ENCODE measurements at regions of chr16 and their contacts with region 1.

Region 1: DNA sequence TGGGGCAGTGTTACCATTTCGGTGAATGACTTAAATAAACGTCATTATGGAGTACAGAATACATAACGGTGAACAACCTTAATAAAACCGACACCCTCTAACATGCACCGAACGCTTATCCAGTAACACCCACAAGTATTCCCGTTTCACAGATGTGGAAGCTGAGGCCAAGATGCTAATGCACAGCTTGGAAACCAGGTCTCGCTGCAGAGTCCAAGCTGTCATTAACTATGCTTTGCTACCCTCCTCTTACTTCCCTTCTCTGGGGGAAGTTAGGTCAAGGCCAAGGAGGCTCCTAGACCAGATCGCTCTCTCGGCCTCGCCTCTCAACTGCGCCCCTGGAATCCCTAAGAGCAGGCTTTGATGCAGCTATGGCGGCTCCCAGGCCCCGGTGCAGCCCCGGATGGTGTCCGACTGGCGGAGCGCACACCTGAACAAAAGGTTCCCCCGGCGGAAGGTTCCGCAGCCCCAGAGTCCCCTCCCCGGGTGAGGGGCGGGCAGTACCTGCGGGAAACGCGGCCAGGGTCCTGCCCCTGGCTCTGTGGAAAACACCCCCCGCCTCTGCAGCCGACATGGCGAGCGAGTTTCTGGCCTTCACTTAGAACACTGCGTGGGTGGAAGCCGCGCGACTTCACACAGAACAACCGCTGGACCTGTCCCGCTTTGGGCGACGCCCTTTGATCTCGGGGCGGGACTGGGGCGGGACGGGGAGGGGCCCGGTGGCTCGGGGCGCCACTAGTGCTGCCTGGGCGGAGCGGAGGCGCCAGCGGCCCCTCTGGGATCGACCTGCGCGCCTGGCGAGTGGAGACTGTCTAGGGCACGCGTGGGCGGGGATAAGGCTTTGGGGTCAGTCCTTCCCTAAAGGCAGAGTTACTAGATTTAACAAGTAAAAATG is at the start of gene CPPED1:
- DNase-seq: peak; percentile 98
- H3K4me3 ChIP-seq: peak within 1 kb of the TSS; percentile 99
- H3K27ac ChIP-seq: peak within 1 kb of the TSS; percentile 93
- H3K4me1 ChIP-seq: peaks cover 26% of the 10 kb centered on the region
- H3K27me3 ChIP-seq: no peaks in the 10 kb centered on the region
- total RNA-seq, gene CPPED1: 11.7 and 38.4 TPM in 2 replicates

Region 2: GRCh38 chr16:12095275-12096156 is 707.9 kb before region 1 on chr16:
- in situ Hi-C with region 1: loop called (anchors 10 kb)
- DNase-seq: peak; percentile 78
- H3K4me3 ChIP-seq: peak overlapping the region; percentile 49
- H3K27ac ChIP-seq: peak overlapping the region; percentile 67
- H3K4me1 ChIP-seq: peaks cover 21% of the 10 kb centered on the region
- H3K27me3 ChIP-seq: no peaks in the 10 kb centered on the region

Region 3: DNA sequence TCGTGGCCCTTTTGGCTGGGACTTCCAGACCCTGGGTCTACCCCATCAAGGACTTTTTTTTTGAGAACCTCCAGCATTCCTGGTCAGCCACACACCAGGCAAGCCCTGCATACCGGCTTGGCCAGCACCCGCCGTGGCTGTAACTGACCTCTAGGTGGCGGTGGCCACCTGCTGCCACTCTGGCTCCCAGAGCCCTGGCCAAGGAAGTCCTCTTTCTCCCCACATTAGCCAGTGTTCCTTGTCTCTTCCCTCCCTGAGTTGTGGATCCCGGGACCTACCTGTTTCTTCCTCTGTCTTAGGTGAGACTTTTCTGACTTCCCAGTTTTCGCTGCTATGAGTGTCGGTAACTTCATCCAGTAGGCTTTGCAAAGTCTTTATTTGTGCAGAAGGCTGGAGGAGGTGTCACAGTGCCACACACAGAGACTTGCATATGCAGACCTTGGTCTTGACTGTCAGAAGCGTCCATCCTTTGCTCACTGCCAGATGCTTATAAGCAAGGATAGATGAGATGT is 348.1 kb before region 1 on chr16:
- in situ Hi-C with region 1: loop called (anchors 25 kb)
- DNase-seq: peak; percentile 77
- H3K4me3 ChIP-seq: no peak overlapping the region
- H3K27ac ChIP-seq: no peak overlapping the region
- H3K4me1 ChIP-seq: no peaks in the 10 kb centered on the region
- H3K27me3 ChIP-seq: no peaks in the 10 kb centered on the region

Region 4: DNA sequence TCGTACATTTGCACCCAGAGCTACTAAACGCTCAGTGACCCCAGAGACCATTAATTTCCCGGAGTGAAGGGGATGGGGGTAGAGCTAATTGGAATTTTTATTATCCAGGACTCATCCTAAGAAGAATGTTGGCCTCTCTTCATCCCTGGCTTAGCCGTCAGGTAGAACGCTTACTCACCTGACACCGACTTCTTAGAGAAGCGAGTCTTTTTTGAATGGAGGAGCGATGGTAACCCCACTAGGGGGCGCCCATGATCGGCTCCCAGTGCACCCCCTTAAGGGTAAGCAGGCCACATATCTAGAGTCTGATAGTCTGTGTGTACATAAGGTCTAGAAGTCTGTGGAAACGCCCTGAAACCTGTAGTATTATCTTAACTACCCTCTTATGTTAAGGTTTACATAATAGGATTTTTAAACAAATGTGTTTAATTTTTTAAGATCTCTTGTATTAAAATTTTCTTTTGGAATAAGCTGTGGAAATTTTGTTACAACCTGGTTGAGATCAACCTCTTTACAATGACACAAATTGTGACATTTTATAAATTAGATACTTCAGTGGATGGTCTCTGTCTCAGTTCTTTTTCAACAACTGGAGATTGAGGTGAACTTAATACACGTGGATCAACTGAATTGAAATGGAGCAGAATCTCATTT is 229.6 kb before region 1 on chr16:
- in situ Hi-C with region 1: loop called (anchors 10 kb)
- DNase-seq: peak; percentile 43
- H3K4me3 ChIP-seq: no peak overlapping the region
- H3K27ac ChIP-seq: no peak overlapping the region
- H3K4me1 ChIP-seq: no peaks in the 10 kb centered on the region
- H3K27me3 ChIP-seq: no peaks in the 10 kb centered on the region

Region 5: DNA sequence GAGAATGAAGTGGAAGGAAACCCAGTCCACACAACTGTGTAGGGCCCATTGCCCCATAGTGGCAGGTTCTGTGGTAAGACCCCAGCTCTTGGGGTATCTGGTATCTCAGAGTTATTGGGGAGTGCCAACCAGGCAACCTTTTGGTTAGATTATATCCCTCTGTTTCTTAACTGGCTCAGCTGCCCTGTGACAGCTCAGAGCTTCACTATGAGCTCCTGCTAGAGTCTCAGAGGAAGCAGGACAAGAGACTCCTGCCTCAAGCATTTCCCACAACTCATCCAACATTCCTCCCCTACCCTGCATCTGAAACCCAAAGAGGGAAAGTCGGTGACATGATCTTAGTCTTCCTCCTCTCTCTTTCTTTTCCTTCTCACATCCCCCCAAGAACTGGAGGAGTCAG is 390.3 kb after region 1 on chr16:
- in situ Hi-C with region 1: no loop called
- DNase-seq: no peak
- H3K4me3 ChIP-seq: no peak overlapping the region
- H3K27ac ChIP-seq: no peak overlapping the region
- H3K4me1 ChIP-seq: no peaks in the 10 kb centered on the region
- H3K27me3 ChIP-seq: no peaks in the 10 kb centered on the region

Measured in GM23248 (cell line).